ENCODE measurements at regions of chr1 and their contacts with region 1.

Region 1: GRCh38 chr1:162633081-162633762 is 958 bp downstream of the DDR2 start:
- DNase-seq: peak; percentile 57
- H3K4me3 ChIP-seq: peak overlapping the region; percentile 71
- H3K27ac ChIP-seq: peak overlapping the region; percentile 89
- H3K4me1 ChIP-seq: peaks cover 44% of the 10 kb centered on the region
- H3K27me3 ChIP-seq: no peaks in the 10 kb centered on the region
- CTCF ChIP-seq: no peak; the same call in 1 of the 2 replicates

Region 2: GRCh38 chr1:162361349-162361748 is 271.9 kb before region 1 on chr1:
- CTCF ChIA-PET with region 1: no interaction called
- POLR2A ChIA-PET with region 1: no interaction called
- intact Hi-C with region 1: no loop called
- DNase-seq: no peak
- H3K4me3 ChIP-seq: no peak overlapping the region
- H3K27ac ChIP-seq: no peak overlapping the region
- H3K4me1 ChIP-seq: peaks cover 28% of the 10 kb centered on the region
- H3K27me3 ChIP-seq: no peaks in the 10 kb centered on the region
- CTCF ChIP-seq: no peak

Region 3: GRCh38 chr1:162561037-162561616 is 72.1 kb before region 1 on chr1:
- CTCF ChIA-PET with region 1: no interaction called
- POLR2A ChIA-PET with region 1: interaction called, 10 read pairs
- intact Hi-C with region 1: no loop called
- DNase-seq: peak; percentile 99
- H3K4me3 ChIP-seq: peak overlapping the region; percentile 91
- H3K27ac ChIP-seq: peak overlapping the region; percentile 90
- H3K4me1 ChIP-seq: peaks cover 27% of the 10 kb centered on the region
- H3K27me3 ChIP-seq: no peaks in the 10 kb centered on the region
- CTCF ChIP-seq: no peak

Region 4: DNA sequence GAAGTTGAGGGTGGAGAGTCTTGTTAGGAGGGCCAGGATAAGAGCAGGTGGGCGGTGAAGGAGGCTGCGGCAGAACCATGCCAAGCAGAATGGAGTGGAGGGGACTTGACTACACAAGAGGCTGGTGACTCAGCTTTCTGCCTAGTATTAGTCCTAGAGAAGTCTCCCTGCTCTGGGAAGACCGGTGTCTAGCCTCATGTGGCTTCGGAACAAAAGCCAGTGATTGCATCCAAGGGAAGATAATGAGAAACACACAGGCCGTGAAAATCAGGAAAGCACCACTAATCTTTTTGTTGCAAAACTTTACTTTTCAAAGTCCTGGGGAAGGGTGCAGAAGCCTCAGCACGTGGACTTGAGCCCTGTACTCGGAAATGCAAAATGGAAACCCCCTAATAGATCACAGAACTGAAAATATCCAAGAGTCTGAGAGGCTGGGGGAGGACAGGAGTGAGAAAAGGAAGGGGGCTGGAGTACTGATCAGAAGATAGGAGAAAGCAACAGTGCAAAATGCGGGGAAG is 30.4 kb after region 1 on chr1:
- CTCF ChIA-PET with region 1: interaction called, 5 read pairs
- POLR2A ChIA-PET with region 1: interaction called, 3 read pairs
- intact Hi-C with region 1: loop called (anchors 2 kb)
- DNase-seq: peak; percentile 96
- H3K4me3 ChIP-seq: peak overlapping the region; percentile 19
- H3K27ac ChIP-seq: peak overlapping the region; percentile 91
- H3K4me1 ChIP-seq: peaks cover 100% of the 10 kb centered on the region
- H3K27me3 ChIP-seq: no peaks in the 10 kb centered on the region
- CTCF ChIP-seq: no peak

Region 5: DNA sequence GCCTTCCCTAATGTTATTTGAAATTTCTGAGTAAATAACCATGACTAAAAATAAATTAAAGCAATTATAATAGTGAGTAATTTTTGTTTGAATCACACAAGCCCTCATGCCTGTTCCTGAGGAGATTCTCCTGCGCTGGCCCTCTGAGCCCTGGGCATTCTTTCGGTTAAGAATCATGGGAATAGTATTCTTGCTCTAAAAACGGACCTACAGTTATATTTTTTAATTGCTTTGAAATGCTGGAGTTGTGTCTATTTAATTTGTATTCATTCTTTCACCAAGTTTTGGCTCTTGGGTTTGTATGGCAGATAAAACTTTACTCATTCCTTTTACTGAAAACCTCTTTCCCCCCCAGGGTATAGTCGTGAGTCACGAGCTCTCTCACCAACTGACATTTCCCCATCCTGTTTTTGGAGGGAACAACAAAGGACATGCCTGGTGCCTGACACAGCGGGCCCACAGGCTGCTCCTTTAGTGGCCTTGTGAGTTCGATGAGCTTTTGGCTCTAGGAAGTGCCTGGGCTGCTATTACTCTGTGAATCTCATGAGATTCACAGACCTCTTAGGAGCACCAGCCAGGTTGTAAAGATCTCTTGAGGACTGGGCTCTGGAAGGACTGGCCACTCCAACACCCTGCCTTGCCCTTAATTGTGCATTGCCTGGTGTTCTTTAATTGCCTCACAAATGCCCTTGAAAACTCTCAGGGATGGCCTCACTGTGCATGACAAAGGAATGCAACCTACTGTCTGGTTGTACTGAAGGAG is 57.6 kb after region 1 on chr1:
- CTCF ChIA-PET with region 1: interaction called, 10 read pairs
- POLR2A ChIA-PET with region 1: no interaction called
- intact Hi-C with region 1: no loop called
- DNase-seq: peak; percentile 90
- H3K4me3 ChIP-seq: no peak overlapping the region
- H3K27ac ChIP-seq: peak overlapping the region; percentile 59
- H3K4me1 ChIP-seq: peaks cover 35% of the 10 kb centered on the region
- H3K27me3 ChIP-seq: no peaks in the 10 kb centered on the region
- CTCF ChIP-seq: no peak